Colonic mucosa (tissue), 4 donors: ENCODE measurements at regions of chr14 and their contacts with region 1.

Region 1: GRCh38 chr14:67943947-67944346 is 124.4 kb downstream of the RAD51B start:
- DNase-seq: peak; percentile 86
- H3K4me3 ChIP-seq: no peak overlapping the region
- H3K27ac ChIP-seq: no peak overlapping the region
- H3K4me1 ChIP-seq: peaks cover 4% of the 10 kb centered on the region
- H3K27me3 ChIP-seq: no peaks in the 10 kb centered on the region
- CTCF ChIP-seq: peak; percentile 55

Region 2: GRCh38 chr14:67883717-67884116 is 60.2 kb before region 1 on chr14:
- intact Hi-C with region 1: no loop called
- DNase-seq: no peak
- H3K4me3 ChIP-seq: no peak overlapping the region
- H3K27ac ChIP-seq: no peak overlapping the region
- H3K4me1 ChIP-seq: no peaks in the 10 kb centered on the region
- H3K27me3 ChIP-seq: no peaks in the 10 kb centered on the region
- CTCF ChIP-seq: no peak

Region 3: GRCh38 chr14:68089146-68089731 is 145.3 kb after region 1 on chr14:
- intact Hi-C with region 1: no loop called
- DNase-seq: no peak
- H3K4me3 ChIP-seq: no peak overlapping the region
- H3K27ac ChIP-seq: no peak overlapping the region
- H3K4me1 ChIP-seq: no peaks in the 10 kb centered on the region
- H3K27me3 ChIP-seq: no peaks in the 10 kb centered on the region
- CTCF ChIP-seq: no peak

Region 4: DNA sequence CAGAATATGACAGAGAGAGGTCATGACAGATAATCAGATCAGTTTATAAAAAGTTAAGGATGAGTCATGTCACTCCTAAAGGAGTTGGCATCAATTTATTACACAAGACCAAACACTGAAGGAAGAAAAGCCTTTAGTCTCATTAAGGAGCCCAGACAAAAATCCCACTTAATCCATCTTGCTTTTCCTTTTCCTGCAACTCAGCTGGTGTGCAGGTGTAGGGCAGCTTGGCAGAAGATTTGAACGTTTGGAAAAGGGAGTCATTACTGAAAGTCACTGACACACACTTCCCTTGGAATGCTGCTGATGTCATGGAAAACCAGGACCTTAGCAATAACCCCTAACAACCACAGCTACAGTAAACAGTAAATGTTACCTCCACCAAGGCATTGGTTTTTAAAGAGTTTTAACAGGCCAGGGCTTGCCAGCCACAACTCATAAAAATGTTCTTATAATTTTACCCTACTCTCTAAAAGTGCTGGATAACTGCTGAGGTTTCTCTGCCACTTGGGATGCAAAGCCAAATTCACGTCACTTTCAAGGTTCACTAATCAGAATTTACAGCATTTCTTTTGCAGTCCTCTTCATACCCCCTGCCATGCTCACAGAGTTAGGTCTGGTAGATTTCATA is 196.3 kb after region 1 on chr14:
- intact Hi-C with region 1: loop called (anchors 10 kb)
- DNase-seq: peak; percentile 74
- H3K4me3 ChIP-seq: no peak overlapping the region
- H3K27ac ChIP-seq: peak overlapping the region; percentile 65
- H3K4me1 ChIP-seq: peaks cover 14% of the 10 kb centered on the region
- H3K27me3 ChIP-seq: no peaks in the 10 kb centered on the region
- CTCF ChIP-seq: no peak

Region 5: DNA sequence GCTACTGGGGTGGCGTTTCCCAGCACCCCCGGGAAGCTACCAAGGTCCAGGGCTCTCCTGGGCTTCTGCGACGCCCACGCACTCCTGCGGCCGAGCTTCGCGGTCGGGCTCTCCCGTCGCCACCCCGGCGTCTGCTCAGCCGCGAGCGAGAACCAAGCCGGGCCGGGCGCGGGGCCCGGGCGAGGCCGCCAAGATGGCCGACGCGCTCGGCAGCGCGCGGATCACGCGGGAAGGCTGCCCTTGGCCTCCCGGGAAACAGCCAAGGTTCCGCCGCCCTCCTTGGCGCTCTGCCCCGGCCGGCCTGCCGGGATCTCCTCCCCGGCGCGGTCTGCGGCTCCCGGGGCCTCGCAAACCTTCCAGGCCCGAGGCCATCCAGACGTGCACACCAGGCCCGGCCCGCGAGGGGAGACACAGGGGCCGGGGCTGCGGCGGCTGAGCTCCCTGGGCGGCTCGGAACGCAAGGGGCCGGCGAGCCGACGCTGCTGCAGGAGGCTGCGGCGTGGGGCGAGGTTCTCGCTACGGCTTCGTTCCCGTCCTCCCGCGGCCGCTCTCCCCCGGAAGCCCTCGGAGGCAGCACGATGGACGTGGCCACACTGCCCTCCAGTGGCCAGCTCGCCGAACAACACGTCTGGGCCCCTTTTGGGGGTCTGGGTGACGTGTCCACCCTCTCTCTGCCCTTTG is 872.5 kb after region 1 on chr14:
- intact Hi-C with region 1: loop called (anchors 5 kb)
- DNase-seq: peak; percentile 91
- H3K4me3 ChIP-seq: peak overlapping the region; percentile 47
- H3K27ac ChIP-seq: peak overlapping the region; percentile 99
- H3K4me1 ChIP-seq: peaks cover 10% of the 10 kb centered on the region
- H3K27me3 ChIP-seq: no peaks in the 10 kb centered on the region
- CTCF ChIP-seq: peak; percentile 95